CD4-positive, alpha-beta memory T cell (primary cell): ENCODE measurements at regions of chr20 and their contacts with region 1.

Region 1: DNA sequence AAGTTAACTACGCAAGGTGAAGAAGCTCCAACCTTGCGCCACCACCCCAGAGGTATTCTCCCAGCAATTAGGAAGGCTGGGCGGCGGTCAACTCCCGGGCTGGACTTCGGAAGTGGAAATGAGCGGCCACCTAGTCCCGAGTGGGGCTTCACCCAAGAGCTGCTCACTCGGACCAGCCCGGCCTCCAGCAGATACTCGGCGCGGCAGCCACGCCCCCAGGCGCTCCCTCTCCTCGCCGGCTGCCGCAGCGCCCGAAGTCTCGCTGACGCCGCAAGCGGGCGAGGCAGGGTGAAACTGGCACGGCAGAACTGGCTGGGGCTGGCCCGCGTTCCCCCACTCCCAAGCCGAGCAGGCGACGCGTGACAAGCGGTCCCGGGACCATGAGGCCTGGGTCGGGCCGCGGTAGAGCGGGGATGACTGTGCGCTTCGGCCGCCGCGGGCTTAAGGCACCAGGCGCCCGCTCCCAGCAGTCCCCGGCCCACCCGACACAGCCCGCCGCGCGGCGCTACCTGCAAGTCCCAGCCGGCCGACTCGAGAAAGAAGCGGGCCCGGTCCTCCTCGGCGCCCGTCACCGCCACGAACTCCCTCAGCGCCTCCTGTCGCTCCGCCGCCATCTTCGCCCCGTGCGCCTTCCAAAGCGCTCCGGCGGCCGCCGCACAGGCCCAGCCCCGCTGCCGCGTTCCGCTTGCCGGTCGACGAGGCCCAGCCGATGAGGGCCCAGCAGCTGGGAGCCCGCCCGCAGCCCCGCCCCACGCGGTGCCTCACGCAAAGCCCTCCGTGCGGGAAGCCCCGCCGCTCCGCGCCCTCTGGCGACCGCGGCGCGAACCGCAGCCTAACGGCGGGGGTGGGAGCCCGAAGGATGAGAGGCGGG is at the start of gene NSFL1C:
- DNase-seq: peak; percentile 95 to 99 (median 97)
- H3K4me3 ChIP-seq: peak within 1 kb of the TSS; percentile 53 to 65
- H3K4me3 Mint-ChIP-seq: peak within 1 kb of the TSS; percentile 78 to 93 (median 88)
- H3K27ac ChIP-seq: peak within 1 kb of the TSS; percentile 89
- H3K27ac Mint-ChIP-seq: peak within 1 kb of the TSS; percentile 66 to 95 (median 91)
- H3K4me1 ChIP-seq: peaks cover 41% of the 10 kb centered on the region
- H3K4me1 Mint-ChIP-seq: peaks cover 34 to 49% (median 40%) of the 10 kb centered on the region in 4 donors
- H3K27me3 ChIP-seq: no peaks in the 10 kb centered on the region
- H3K27me3 Mint-ChIP-seq: peaks cover 1 to 5% of the 10 kb centered on the region in 2 donors
- total RNA-seq, gene NSFL1C: 57.5 to 65.8 TPM

Region 2: GRCh38 chr20:844473-845225 is 621.8 kb before region 1 on chr20:
- CTCF ChIA-PET with region 1: no interaction called
- POLR2A ChIA-PET with region 1: no interaction called
- intact Hi-C with region 1: loop called (anchors 10 kb)
- DNase-seq: peak; percentile 81 to 96 (median 86)
- H3K4me3 ChIP-seq: peak overlapping the region; percentile 67 to 74
- H3K4me3 Mint-ChIP-seq: peak overlapping the region; percentile 87 to 93 (median 90)
- H3K27ac ChIP-seq: peak overlapping the region; percentile 70
- H3K27ac Mint-ChIP-seq: peak overlapping the region; percentile 70 to 89 (median 83)
- H3K4me1 ChIP-seq: peaks cover 68% of the 10 kb centered on the region
- H3K4me1 Mint-ChIP-seq: peaks cover 27 to 62% (median 45%) of the 10 kb centered on the region in 4 donors
- H3K27me3 ChIP-seq: no peaks in the 10 kb centered on the region
- H3K27me3 Mint-ChIP-seq: no peaks in the 10 kb centered on the region

Region 3: GRCh38 chr20:1313236-1313964 is 153.0 kb before region 1 on chr20:
- CTCF ChIA-PET with region 1: interaction called, 9 read pairs
- POLR2A ChIA-PET with region 1: no interaction called
- intact Hi-C with region 1: loop called (anchors 1 kb)
- DNase-seq: peak; percentile 54 to 59 (median 54)
- H3K4me3 ChIP-seq: no peak overlapping the region
- H3K4me3 Mint-ChIP-seq: no peak overlapping the region
- H3K27ac ChIP-seq: no peak overlapping the region
- H3K27ac Mint-ChIP-seq: peak overlapping the region in 1 of 7 donors; percentile 54
- H3K4me1 ChIP-seq: peaks cover 8% of the 10 kb centered on the region
- H3K4me1 Mint-ChIP-seq: peaks cover 4 to 10% (median 7%) of the 10 kb centered on the region in 4 donors
- H3K27me3 ChIP-seq: no peaks in the 10 kb centered on the region
- H3K27me3 Mint-ChIP-seq: no peaks in the 10 kb centered on the region

Region 4: DNA sequence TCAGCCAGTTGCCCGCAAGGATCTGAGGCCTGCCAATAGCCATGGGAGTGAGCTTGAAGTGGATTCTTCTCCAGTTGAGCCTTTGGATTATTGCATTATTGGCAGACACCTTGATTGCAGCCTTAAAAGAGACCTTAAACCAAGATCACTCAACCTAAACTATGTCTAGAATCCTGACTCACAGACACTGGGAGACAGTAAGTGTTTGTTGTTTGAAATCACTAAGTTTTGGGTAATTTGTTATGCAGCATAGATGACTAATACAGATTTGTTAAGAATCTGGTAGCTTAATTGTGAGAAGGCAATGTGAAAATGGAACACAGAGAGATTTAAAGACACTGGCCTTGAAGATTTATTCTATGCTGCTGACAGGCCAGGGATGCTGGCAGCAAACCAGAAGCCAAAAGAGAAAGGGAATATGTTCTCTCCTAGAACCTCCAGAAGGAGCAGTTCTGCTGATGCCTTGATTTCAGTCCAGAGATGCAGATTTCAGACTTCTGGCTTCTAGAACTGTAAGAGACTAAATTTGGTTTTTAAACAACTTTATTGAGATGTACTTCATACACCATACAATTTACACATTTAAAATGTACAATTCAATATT is 73.5 kb after region 1 on chr20:
- CTCF ChIA-PET with region 1: no interaction called
- POLR2A ChIA-PET with region 1: no interaction called
- intact Hi-C with region 1: no loop called
- DNase-seq: no peak
- H3K4me3 ChIP-seq: no peak overlapping the region
- H3K4me3 Mint-ChIP-seq: no peak overlapping the region
- H3K27ac ChIP-seq: no peak overlapping the region
- H3K27ac Mint-ChIP-seq: no peak overlapping the region
- H3K4me1 ChIP-seq: no peaks in the 10 kb centered on the region
- H3K4me1 Mint-ChIP-seq: peaks cover 0 to 6% (median 4%) of the 10 kb centered on the region in 4 donors
- H3K27me3 ChIP-seq: no peaks in the 10 kb centered on the region
- H3K27me3 Mint-ChIP-seq: no peaks in the 10 kb centered on the region

Region 5: DNA sequence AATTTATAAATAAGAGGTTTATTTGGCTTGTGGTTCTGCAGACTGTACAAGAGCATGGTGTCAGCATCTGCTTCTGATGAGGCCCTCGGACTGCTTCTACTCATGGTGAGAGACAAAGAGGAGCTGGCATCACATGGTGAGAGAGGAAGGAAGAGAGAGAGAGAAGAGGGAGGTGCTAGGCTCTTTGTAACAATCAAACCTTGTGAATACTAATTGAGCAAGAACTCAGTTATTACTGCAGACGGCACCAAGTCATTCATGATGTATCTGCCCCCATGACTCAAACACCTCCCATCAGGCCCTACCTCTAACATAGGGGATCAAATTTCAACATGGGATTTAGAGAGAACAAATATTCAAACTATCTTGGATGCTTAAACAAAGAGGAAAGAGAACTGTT is 197.5 kb after region 1 on chr20:
- CTCF ChIA-PET with region 1: interaction called, 3 read pairs
- POLR2A ChIA-PET with region 1: no interaction called
- intact Hi-C with region 1: loop called (anchors 5 kb)
- DNase-seq: peak in 1 of 5 donors; percentile 24
- H3K4me3 ChIP-seq: peak overlapping the region in 1 of 2 donors; percentile 44
- H3K4me3 Mint-ChIP-seq: peak overlapping the region in 7 of 8 donors; percentile 73 to 88 (median 81)
- H3K27ac ChIP-seq: peak overlapping the region; percentile 54
- H3K27ac Mint-ChIP-seq: peak overlapping the region; percentile 73 to 97 (median 91)
- H3K4me1 ChIP-seq: peaks cover 96% of the 10 kb centered on the region
- H3K4me1 Mint-ChIP-seq: peaks cover 72 to 93% (median 82%) of the 10 kb centered on the region in 4 donors
- H3K27me3 ChIP-seq: no peaks in the 10 kb centered on the region
- H3K27me3 Mint-ChIP-seq: no peaks in the 10 kb centered on the region